ENCODE measurements at regions of chr2 and their contacts with region 1.

Region 1: GRCh38 chr2:160970052-160970965 is 189.9 kb upstream of the TANK start:
- DNase-seq: peak; percentile 59
- H3K4me3 ChIP-seq: no peak overlapping the region
- H3K27ac ChIP-seq: no peak overlapping the region
- H3K27me3 ChIP-seq: no peaks in the 10 kb centered on the region
- CTCF ChIP-seq: peak; percentile 86

Region 2: GRCh38 chr2:160324161-160324800 is 646.0 kb before region 1 on chr2:
- CTCF ChIA-PET with region 1: interaction called, 28 read pairs
- POLR2A ChIA-PET with region 1: no interaction called
- DNase-seq: no peak
- H3K4me3 ChIP-seq: no peak overlapping the region
- H3K27ac ChIP-seq: no peak overlapping the region
- H3K27me3 ChIP-seq: no peaks in the 10 kb centered on the region
- CTCF ChIP-seq: peak; percentile 78

Region 3: DNA sequence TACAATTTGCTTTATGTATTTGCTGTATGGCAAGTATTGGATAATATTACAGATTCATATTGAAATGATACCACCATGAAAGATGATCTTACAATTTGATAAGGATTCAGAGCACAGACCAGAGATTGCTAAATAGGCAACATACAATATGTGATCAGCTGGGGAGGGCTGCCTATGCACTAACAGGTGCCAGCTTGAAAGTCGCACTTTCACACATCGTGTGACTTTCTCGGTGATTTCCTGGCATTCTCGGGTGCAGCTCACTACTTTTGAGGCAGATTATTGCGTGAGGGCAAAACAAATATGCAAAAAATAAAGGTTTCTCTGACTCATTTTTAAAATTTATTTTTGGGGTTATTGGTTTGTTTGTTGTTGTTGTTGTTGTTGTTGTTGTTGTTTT is 512.7 kb before region 1 on chr2:
- CTCF ChIA-PET with region 1: interaction called, 11 read pairs
- POLR2A ChIA-PET with region 1: no interaction called
- DNase-seq: no peak
- H3K4me3 ChIP-seq: no peak overlapping the region
- H3K27ac ChIP-seq: no peak overlapping the region
- H3K27me3 ChIP-seq: no peaks in the 10 kb centered on the region
- CTCF ChIP-seq: no peak

Region 4: DNA sequence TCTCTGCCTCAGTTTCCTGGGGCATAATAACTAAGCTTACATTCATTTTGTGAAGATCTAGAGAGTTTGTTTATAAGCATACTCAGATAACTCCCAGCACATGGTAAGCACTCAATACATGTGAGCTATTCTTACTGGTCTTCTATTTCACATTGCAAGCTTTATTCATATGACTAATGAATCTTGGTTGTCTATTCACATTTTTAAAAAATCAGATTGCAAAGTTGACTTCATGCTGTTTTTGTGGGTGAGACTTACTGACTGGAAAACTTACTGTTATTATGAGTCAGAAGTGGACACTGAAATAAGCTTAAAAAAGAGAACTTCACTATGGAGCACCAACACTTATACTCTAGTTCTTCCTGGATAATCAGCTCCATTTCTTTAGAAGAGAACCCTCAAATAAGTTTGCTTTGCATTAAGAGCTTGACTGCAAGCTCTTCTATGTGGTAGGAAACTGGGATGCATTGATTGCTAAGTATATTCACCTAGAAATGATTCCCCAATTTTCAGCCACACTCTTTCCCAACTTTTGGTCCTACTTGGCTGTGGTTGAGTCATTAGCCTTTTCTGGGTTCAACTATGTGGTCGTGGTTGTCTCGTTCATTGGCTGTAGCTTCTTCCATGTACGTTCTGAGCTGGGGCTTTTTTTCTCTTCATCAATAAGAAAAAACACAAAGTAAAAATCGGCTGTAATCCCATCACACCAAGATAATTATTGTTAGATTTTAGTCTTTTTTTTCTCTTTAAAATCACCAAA is 447.2 kb before region 1 on chr2:
- CTCF ChIA-PET with region 1: interaction called, 12 read pairs
- POLR2A ChIA-PET with region 1: no interaction called
- DNase-seq: peak; percentile 13
- H3K4me3 ChIP-seq: no peak overlapping the region
- H3K27ac ChIP-seq: no peak overlapping the region
- H3K27me3 ChIP-seq: no peaks in the 10 kb centered on the region
- CTCF ChIP-seq: no peak

Region 5: GRCh38 chr2:160816916-160817499 is 153.3 kb before region 1 on chr2:
- CTCF ChIA-PET with region 1: no interaction called
- POLR2A ChIA-PET with region 1: no interaction called
- DNase-seq: no peak
- H3K4me3 ChIP-seq: no peak overlapping the region
- H3K27ac ChIP-seq: no peak overlapping the region
- H3K27me3 ChIP-seq: no peaks in the 10 kb centered on the region
- CTCF ChIP-seq: no peak